MCF 10A (cell line): ENCODE measurements at regions of chr2 and their contacts with region 1.

Region 1: DNA sequence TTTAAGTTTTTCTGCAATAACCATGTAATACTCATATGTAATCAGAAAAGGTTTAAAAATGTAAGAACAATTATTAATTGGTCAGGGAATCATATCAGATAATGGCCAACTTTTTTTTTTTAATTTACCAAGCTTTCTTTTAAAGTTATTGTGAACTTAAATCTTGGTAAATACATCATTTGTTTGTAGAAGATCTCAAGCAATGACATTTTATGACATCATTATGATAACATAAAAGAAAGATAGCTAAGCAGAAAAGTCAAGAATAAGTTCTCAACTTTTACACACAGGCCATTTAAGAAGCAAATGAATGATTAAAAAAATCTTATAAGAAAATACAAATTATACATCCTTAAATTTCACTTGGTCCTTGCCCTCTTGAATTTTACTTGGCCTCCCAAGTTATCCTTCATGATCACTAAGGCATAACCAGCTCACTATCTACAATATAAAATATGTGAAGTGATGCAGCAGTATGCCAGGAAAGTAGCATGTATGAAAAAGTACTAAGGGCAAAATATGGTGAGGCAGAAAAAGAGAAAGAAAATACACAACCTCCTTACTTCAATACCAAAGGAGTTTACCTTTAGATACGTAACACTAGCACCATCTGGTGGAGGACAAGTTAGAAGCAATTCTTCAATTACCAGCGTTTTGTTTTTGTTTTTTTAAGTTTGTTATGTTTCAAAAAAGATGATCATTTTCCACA is 116.6 kb downstream of the SRBD1 start:
- DNase-seq: peak; percentile 71
- H3K4me3 Mint-ChIP-seq: no peak overlapping the region
- H3K27ac Mint-ChIP-seq: no peak overlapping the region
- H3K4me1 Mint-ChIP-seq: peaks cover 5% of the 10 kb centered on the region
- H3K27me3 Mint-ChIP-seq: no peaks in the 10 kb centered on the region
- CTCF ChIP-seq: peak; percentile 62

Region 2: GRCh38 chr2:44974064-44974715 is 520.2 kb before region 1 on chr2:
- CTCF ChIA-PET with region 1: interaction called, 168 read pairs
- POLR2A ChIA-PET with region 1: no interaction called
- intact Hi-C with region 1: no loop called
- DNase-seq: peak; percentile 77
- H3K4me3 Mint-ChIP-seq: no peak overlapping the region
- H3K27ac Mint-ChIP-seq: no peak overlapping the region
- H3K4me1 Mint-ChIP-seq: peaks cover 5% of the 10 kb centered on the region
- H3K27me3 Mint-ChIP-seq: no peaks in the 10 kb centered on the region
- CTCF ChIP-seq: peak; percentile 63

Region 3: DNA sequence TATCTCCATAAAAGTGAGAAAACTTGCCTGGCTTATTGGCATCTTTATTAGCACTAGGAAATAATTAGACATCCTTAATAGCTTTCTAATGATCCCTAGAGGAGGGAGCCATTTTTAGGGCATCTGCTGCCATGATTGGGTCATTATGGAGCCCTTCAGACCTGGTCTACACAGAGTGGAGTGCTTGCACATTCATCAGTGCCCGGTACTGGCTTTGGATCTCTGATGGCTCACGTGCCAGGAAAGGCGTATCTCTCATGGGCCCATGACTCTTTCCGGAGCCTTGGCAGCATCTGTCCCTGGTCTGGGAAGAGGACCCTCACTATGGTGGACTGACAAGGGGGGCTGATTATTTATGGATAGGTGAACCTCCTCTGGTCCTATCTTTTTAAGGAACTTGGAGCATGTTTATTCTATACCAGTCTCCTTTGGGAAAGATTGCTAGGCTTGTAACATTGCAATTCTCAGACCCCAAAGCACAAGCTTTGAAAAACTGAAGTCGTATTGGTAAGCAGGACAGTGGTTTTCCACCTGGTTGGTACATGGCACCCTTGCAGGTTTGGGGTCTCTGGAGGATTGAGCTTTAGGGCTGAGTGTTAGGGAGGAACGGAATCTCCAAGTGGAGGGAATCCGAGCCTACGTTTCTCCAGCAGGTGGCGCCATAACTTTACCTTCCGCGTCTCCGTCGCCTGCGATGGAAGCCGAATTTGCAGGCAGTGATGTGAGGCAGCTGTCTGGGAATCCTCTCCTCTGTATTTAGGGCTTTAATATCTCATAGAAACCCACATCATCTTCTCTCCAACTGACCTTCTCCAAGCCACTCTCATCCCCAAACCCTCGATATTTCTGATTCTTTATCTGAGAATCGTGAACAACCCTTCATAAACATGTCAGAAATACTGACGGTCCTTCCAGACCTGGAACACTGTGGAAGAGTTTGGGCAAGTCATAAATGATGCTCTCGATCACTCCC is 513.0 kb before region 1 on chr2:
- CTCF ChIA-PET with region 1: interaction called, 168 read pairs
- POLR2A ChIA-PET with region 1: interaction called, 12 read pairs
- intact Hi-C with region 1: loop called (anchors 1 kb)
- DNase-seq: peak; percentile 75
- H3K4me3 Mint-ChIP-seq: no peak overlapping the region
- H3K27ac Mint-ChIP-seq: no peak overlapping the region
- H3K4me1 Mint-ChIP-seq: no peaks in the 10 kb centered on the region
- H3K27me3 Mint-ChIP-seq: no peaks in the 10 kb centered on the region
- CTCF ChIP-seq: peak; percentile 84

Region 4: GRCh38 chr2:45024600-45025291 is 469.7 kb before region 1 on chr2:
- CTCF ChIA-PET with region 1: interaction called, 20 read pairs
- POLR2A ChIA-PET with region 1: no interaction called
- intact Hi-C with region 1: loop called (anchors 1 kb)
- DNase-seq: peak; percentile 96
- H3K4me3 Mint-ChIP-seq: no peak overlapping the region
- H3K27ac Mint-ChIP-seq: peak overlapping the region; percentile 8
- H3K4me1 Mint-ChIP-seq: peaks cover 28% of the 10 kb centered on the region
- H3K27me3 Mint-ChIP-seq: no peaks in the 10 kb centered on the region
- CTCF ChIP-seq: peak; percentile 54

Region 5: DNA sequence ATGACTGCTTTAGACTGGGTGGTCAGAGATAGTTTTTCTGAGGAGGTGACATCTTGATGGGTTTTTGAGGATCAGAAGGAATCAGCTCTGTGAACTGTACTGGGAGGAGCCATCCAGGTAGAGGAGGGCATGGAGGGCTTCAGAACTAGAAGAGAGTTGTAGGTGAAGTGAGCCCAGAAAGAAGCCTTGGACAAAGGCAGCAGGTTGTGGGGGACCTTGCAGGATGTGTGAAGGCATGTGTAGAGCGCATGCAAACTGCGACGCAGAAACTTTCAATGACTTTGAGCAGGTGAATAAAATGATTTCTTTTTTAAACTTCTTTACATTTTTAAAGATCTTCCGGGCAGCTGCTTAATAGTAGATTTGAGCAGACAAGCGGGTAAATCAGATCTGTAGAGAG is 401.2 kb before region 1 on chr2:
- CTCF ChIA-PET with region 1: no interaction called
- POLR2A ChIA-PET with region 1: no interaction called
- intact Hi-C with region 1: no loop called
- DNase-seq: no peak
- H3K4me3 Mint-ChIP-seq: no peak overlapping the region
- H3K27ac Mint-ChIP-seq: no peak overlapping the region
- H3K4me1 Mint-ChIP-seq: no peaks in the 10 kb centered on the region
- H3K27me3 Mint-ChIP-seq: peaks cover 39% of the 10 kb centered on the region
- CTCF ChIP-seq: no peak

Region 6: GRCh38 chr2:45237850-45238542 is 256.4 kb before region 1 on chr2:
- CTCF ChIA-PET with region 1: interaction called, 8 read pairs
- POLR2A ChIA-PET with region 1: no interaction called
- intact Hi-C with region 1: loop called (anchors 1 kb)
- DNase-seq: peak; percentile 96
- H3K4me3 Mint-ChIP-seq: peak overlapping the region; percentile 22
- H3K27ac Mint-ChIP-seq: peak overlapping the region; percentile 95
- H3K4me1 Mint-ChIP-seq: peaks cover 23% of the 10 kb centered on the region
- H3K27me3 Mint-ChIP-seq: no peaks in the 10 kb centered on the region
- CTCF ChIP-seq: peak; percentile 34

Region 7: DNA sequence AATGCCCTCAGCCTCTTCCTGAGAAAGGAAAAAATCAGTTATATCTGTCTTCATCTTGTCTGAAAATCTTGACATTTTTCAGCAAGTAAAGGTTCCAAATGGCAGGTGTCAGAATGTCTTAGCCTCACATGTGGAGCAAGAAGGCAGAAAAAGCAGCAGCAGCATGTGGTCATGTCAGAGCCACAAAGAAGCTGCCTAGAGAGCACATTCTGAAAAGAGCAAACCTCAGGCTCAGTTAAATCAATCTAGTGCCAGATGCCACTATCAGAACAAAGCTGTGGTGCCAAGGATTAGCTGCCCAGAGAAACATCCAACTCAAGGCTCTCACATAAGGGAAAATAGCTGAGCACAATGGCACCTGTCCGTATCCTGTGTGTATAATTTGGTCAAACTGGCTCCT is 10.7 kb after region 1 on chr2:
- CTCF ChIA-PET with region 1: interaction called, 12 read pairs
- POLR2A ChIA-PET with region 1: no interaction called
- intact Hi-C with region 1: no loop called
- DNase-seq: no peak
- H3K4me3 Mint-ChIP-seq: no peak overlapping the region
- H3K27ac Mint-ChIP-seq: no peak overlapping the region
- H3K4me1 Mint-ChIP-seq: no peaks in the 10 kb centered on the region
- H3K27me3 Mint-ChIP-seq: no peaks in the 10 kb centered on the region
- CTCF ChIP-seq: no peak

Region 8: DNA sequence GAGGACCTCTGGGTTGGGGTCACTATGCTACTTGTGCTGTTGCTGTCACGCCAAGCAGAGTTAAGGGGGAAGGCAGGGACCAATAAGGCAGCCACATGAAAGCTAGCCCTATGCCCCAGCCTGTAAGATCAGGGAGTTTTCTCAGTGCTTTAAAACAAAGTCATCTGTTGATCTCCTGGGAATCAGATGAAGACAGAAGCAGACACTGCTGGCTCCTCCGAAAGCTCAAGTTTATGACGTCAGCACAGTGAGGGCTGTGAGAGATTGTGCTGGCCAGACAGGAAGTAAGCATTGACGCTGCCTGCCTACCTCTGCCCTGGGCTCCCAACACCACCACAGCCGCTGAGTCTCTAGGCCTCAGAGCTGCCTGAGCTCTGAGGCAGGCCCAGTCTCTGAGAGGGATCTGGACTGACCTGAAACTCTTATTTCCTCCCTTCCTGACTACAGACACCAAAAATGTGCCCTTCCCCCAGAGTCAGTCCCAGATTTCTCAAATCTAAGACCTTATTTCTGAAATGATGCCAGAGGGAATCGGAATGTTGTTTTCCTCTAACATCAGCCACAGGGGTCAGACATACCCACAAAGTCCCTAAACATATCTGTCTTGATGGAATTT is 684.7 kb after region 1 on chr2:
- CTCF ChIA-PET with region 1: no interaction called
- POLR2A ChIA-PET with region 1: no interaction called
- intact Hi-C with region 1: no loop called
- DNase-seq: no peak
- H3K4me3 Mint-ChIP-seq: no peak overlapping the region
- H3K27ac Mint-ChIP-seq: no peak overlapping the region
- H3K4me1 Mint-ChIP-seq: peaks cover 19% of the 10 kb centered on the region
- H3K27me3 Mint-ChIP-seq: no peaks in the 10 kb centered on the region
- CTCF ChIP-seq: no peak